HEK293T (cell line): ENCODE measurements at regions of chr1 and their contacts with region 1.

Region 1: DNA sequence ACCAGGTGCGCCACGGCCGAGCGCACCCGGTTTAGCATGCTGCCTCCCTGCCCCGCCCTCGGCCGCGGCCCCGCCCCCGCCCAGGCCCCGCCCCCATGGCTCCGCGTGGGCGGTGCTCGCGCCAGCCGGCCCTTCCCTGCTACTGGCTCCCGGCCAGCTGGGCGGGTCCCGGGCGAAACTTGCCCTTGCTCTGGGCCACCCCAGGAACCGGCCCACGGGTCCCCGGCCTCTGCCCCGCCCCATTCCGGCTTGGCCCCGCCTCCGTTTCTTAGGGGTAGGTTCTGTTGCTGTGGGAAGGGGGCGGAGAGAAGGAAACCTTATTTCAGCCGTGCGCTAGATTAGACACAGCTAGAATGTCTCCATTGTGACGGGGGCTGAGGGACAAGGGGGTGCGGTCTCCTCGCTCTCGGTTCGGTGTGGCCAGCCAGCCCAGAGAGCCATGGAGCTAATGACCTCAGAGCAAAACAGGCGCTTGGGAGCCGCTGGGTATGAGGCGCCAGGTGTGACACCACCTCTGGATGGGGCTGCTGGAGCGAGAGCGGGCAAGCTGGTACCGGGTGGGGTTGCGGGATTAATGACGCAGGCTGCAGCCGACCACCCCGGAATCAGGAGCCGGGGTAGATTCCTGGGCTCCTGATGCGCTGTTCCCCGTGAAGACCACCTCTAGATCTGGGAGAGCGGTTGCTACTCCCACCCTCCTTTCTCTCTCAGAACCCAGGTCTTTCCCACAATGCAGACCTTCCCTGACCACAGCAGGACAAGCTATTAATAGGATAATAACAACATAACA is at the start of gene PPM1J:
- DNase-seq: peak; percentile 99

Region 2: GRCh38 chr1:112188611-112189010 is 526.8 kb before region 1 on chr1:
- CTCF ChIA-PET with region 1: no interaction called
- POLR2A ChIA-PET with region 1: no interaction called
- DNase-seq: no peak

Region 3: GRCh38 chr1:112637254-112638116 is 78.0 kb before region 1 on chr1:
- CTCF ChIA-PET with region 1: no interaction called
- POLR2A ChIA-PET with region 1: no interaction called
- DNase-seq: no peak

Region 4: DNA sequence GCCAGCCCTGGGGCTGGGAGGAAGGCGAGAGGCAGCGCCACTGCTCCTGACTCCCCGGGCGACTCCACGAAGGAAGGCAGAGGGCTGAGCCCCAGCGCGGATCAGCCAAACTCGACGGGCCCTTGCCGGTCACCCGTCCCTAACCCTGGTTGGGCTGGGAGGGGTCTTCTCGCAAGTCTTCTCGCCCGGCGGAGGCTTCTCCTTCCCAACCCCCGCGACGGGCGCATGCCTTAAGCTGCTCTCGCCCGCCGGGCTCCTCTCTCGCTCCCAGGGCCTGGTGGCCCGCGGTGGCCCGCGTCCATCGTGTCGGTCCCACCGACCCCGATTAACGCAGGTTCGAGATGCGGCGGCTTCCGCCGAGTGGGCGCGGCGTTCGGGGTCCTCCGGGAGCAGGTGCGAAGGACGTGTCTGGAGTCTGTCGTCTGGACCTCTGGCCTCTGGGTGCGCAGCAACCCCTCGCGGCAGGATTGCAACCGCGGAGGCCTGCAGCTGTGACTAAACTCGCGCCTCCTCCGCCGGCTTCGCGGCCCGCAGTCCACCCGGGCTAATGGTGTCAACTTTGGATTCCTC is 28.6 kb after region 1 on chr1:
- CTCF ChIA-PET with region 1: interaction called, 12 read pairs
- POLR2A ChIA-PET with region 1: no interaction called
- DNase-seq: no peak

Region 5: GRCh38 chr1:112803906-112804762 is 88.7 kb after region 1 on chr1:
- CTCF ChIA-PET with region 1: interaction called, 185 read pairs
- POLR2A ChIA-PET with region 1: interaction called, 4 read pairs
- DNase-seq: peak; percentile 88

Region 6: GRCh38 chr1:112872551-112872962 is 157.1 kb after region 1 on chr1:
- CTCF ChIA-PET with region 1: no interaction called
- POLR2A ChIA-PET with region 1: no interaction called
- DNase-seq: no peak